PC-3 (cell line): ENCODE measurements at regions of chr10 and their contacts with region 1.

Region 1: DNA sequence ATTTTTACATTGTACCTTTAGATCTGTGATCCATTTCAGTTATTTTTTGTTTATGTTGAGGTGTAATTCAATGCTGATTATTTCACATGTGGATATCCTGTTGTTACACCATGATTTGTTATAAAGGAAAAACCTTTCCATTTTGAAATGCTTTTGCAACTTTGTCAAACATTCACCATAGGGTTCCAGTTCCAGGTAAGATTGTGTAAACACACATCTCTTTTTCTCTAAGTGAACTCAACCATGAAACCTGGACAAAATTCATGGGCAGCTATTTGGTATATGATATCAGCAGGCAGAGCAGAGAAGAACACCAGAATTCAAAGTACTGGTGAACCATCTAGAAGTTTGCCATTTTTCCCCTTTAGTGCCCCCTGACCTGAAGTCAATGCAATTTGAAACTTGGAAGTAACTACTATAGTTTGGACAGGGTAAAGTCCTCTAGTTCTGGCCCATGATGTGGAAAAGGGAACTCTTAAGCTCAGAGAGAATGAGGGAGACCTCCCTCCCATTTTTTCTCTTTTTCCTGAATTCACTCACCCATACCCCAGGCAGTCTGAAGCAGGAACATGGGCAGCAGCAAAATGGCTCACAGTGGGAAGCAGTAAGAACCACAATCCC is 446.1 kb downstream of the ATRNL1 start:
- DNase-seq: no peak
- ATAC-seq: no peak
- H3K4me3 ChIP-seq: no peak overlapping the region
- H3K27ac ChIP-seq: no peak overlapping the region
- H3K4me1 ChIP-seq: no peaks in the 10 kb centered on the region
- H3K27me3 ChIP-seq: no peaks in the 10 kb centered on the region
- CTCF ChIP-seq: no peak

Region 2: DNA sequence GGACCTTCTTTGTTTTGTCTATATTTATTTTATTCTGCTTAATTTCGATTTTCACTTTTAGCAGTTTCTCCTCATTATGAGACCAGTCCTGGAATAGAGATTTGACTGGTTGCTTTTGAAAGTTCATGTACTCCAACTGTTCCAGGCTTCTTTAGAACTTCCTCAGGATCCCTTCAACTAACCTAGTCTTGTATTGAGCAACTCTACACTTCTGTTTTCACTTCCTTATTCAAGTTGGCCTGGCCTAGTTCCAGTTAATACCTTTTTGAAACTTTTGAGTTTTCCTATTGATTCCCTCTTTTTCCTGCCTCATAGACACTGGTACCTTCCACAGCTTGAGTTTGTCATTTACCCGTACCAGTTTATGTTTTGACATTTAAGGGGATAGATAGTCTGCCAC is 24.4 kb before region 1 on chr10:
- CTCF ChIA-PET with region 1: no interaction called
- POLR2A ChIA-PET with region 1: no interaction called
- intact Hi-C with region 1: loop called (anchors 2 kb)
- DNase-seq: no peak
- ATAC-seq: no peak
- H3K4me3 ChIP-seq: no peak overlapping the region
- H3K27ac ChIP-seq: no peak overlapping the region
- H3K4me1 ChIP-seq: no peaks in the 10 kb centered on the region
- H3K27me3 ChIP-seq: no peaks in the 10 kb centered on the region
- CTCF ChIP-seq: no peak